OCI-LY7 (cell line): ENCODE measurements at regions of chr5 and their contacts with region 1.

Region 1: GRCh38 chr5:139975306-139975705 is 67.8 kb downstream of the NRG2 start:
- DNase-seq: no peak
- H3K4me3 ChIP-seq: no peak overlapping the region
- H3K27ac ChIP-seq: no peak overlapping the region
- H3K4me1 ChIP-seq: no peaks in the 10 kb centered on the region
- CTCF ChIP-seq: no peak

Region 2: GRCh38 chr5:139651853-139652787 is 323.2 kb before region 1 on chr5:
- CTCF ChIA-PET with region 1: no interaction called
- POLR2A ChIA-PET with region 1: no interaction called
- intact Hi-C with region 1: no loop called
- DNase-seq: peak; percentile 87
- H3K4me3 ChIP-seq: peak overlapping the region; percentile 94
- H3K27ac ChIP-seq: peak overlapping the region; percentile 89
- H3K4me1 ChIP-seq: peaks cover 72% of the 10 kb centered on the region
- CTCF ChIP-seq: no peak

Region 3: GRCh38 chr5:140189253-140189652 is 213.9 kb after region 1 on chr5:
- CTCF ChIA-PET with region 1: interaction called, 16 read pairs
- POLR2A ChIA-PET with region 1: no interaction called
- intact Hi-C with region 1: no loop called
- DNase-seq: no peak
- H3K4me3 ChIP-seq: no peak overlapping the region
- H3K27ac ChIP-seq: no peak overlapping the region
- H3K4me1 ChIP-seq: no peaks in the 10 kb centered on the region
- CTCF ChIP-seq: no peak